Prostate gland (tissue), 2 donors: ENCODE measurements at regions of chr14 and their contacts with region 1.

Region 1: DNA sequence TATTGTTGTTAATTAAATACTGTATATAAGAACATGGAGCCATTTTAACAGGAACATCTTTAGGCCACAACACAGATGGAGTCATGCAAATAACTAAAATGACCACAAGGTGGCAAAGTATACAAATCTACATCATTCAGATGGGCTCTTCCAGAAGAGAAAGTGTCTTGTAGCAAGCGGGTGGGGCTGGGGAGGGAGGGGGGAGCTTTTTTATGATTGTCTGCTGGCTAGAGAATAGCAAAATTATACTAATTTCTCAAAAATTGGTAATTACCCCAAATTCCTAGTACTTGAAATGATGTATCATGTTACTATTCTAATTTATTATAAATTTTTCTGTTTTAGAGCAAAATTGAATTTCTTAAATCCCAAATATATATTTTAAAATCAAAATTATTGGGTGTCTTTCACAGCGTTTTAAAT is 378.7 kb downstream of the PRKD1 start:
- DNase-seq: peak; percentile 18
- H3K4me3 ChIP-seq: no peak overlapping the region
- H3K27ac ChIP-seq: no peak overlapping the region
- H3K4me1 ChIP-seq: no peaks in the 10 kb centered on the region
- H3K27me3 ChIP-seq: no peaks in the 10 kb centered on the region
- CTCF ChIP-seq: peak in 3 of 4 experiments; percentile 60 to 78 (median 69)
- POLR2A ChIP-seq: no peak

Region 2: DNA sequence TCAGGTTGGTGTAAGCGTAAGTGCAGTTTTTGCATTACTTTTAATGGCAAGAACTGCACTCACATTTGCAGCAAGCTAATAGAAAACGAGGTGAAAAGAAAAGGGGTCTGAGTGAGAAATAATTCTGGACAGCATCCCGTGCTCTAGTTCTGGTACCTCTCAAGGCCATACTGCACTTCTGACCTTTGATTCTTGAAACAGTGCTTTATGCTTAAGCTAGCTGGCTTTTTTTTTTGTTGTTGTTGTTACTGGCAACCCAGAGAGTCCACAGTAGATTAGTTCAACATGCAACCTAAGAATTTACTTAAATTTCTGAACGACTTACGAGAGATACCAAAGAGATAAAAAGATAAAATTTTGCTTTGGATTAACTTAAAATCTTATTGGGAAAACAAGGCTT is 453.9 kb after region 1 on chr14:
- intact Hi-C with region 1: loop called (anchors 5 kb)
- DNase-seq: no peak
- H3K4me3 ChIP-seq: no peak overlapping the region
- H3K27ac ChIP-seq: no peak overlapping the region
- H3K4me1 ChIP-seq: no peaks in the 10 kb centered on the region
- H3K27me3 ChIP-seq: no peaks in the 10 kb centered on the region
- CTCF ChIP-seq: no peak
- POLR2A ChIP-seq: no peak

Region 3: DNA sequence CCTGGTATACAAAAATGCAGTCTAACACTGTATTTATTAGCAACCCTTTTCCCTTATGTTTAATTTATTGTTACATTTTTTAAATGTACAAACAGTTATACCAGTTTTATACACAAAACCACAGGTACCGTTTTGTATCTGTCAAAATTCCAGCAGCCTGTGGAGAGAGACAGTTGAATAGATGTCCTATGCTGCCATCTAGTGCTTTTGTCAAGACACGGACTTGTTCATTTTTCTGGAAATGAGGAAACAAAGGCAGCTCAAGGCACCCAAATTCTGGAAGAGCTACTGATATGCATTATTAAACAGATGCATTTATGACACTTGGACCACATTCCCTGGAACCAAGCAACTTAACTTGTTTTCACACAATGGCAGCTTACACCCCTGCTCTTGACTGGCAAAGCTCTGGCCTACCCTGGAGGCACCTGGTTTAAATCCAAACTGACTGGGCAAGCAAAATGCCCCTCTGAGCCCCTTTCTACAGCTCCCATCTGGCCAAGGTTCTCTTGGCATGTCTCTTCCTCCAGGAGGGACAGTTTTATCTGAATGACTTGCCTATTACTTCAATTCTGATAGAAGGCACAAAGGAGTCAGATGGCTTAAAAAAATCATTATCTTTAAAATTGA is 665.6 kb after region 1 on chr14:
- intact Hi-C with region 1: loop called (anchors 5 kb)
- DNase-seq: peak; percentile 32
- H3K4me3 ChIP-seq: no peak overlapping the region
- H3K27ac ChIP-seq: no peak overlapping the region
- H3K4me1 ChIP-seq: no peaks in the 10 kb centered on the region
- H3K27me3 ChIP-seq: no peaks in the 10 kb centered on the region
- CTCF ChIP-seq: peak in 3 of 4 experiments; percentile 58 to 68 (median 63)
- POLR2A ChIP-seq: no peak